ENCODE measurements at regions of chr5 and their contacts with region 1.

Region 1: GRCh38 chr5:19496056-19496455 is 491.9 kb downstream of the CDH18 start:
- DNase-seq: peak; percentile 3
- H3K4me3 Mint-ChIP-seq: no peak overlapping the region
- H3K27ac Mint-ChIP-seq: peak overlapping the region; percentile 82
- H3K4me1 Mint-ChIP-seq: peaks cover 7% of the 10 kb centered on the region
- H3K27me3 Mint-ChIP-seq: no peaks in the 10 kb centered on the region
- CTCF ChIP-seq: no peak

Region 2: GRCh38 chr5:19179571-19179970 is 316.5 kb before region 1 on chr5:
- CTCF ChIA-PET with region 1: no interaction called
- POLR2A ChIA-PET with region 1: no interaction called
- intact Hi-C with region 1: no loop called
- DNase-seq: no peak
- H3K4me3 Mint-ChIP-seq: no peak overlapping the region
- H3K27ac Mint-ChIP-seq: no peak overlapping the region
- H3K4me1 Mint-ChIP-seq: no peaks in the 10 kb centered on the region
- H3K27me3 Mint-ChIP-seq: no peaks in the 10 kb centered on the region
- CTCF ChIP-seq: no peak

Region 3: DNA sequence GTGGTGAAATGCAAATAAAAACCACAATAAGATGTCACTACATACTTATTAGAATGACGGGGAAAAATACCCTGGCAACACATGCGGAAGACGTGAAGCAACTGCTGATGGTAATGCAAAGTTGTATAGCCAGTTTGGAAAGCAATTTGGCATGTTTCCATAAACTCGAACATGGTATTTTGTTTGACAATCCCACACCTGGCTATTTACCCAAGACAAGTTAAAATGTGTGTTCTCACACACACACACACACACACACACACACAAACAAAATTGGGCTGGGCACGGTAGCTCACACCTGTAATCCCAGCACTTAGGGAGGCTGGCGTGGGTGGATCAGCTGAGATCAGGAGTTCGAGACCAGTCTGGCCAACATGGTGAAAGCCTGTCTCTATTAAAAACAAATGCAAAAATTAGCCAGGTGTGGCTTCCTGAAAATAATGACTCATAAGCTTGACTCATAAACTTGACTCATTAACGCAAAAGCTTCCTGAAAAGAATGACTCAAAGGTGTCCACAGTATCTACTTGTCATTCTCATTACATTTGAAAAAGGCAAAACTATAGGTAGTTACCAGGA is 35.4 kb after region 1 on chr5:
- CTCF ChIA-PET with region 1: no interaction called
- POLR2A ChIA-PET with region 1: interaction called, 4 read pairs
- intact Hi-C with region 1: loop called (anchors 5 kb)
- DNase-seq: peak; percentile 92
- H3K4me3 Mint-ChIP-seq: peak overlapping the region; percentile 67
- H3K27ac Mint-ChIP-seq: peak overlapping the region; percentile 98
- H3K4me1 Mint-ChIP-seq: peaks cover 25% of the 10 kb centered on the region
- H3K27me3 Mint-ChIP-seq: no peaks in the 10 kb centered on the region
- CTCF ChIP-seq: no peak

Measured in MCF 10A (cell line).